Activated B cell treated with CpG ODN at 0.5 μM for 24 hours (primary cell): ENCODE measurements at regions of chr21 and their contacts with region 1.

Region 1: GRCh38 chr21:15841856-15842564 is 112.2 kb downstream of the USP25 start:
- DNase-seq: no peak
- ATAC-seq: no peak
- H3K4me3 Mint-ChIP-seq: no peak overlapping the region
- H3K27ac Mint-ChIP-seq: no peak overlapping the region
- H3K4me1 Mint-ChIP-seq: no peaks in the 10 kb centered on the region
- H3K27me3 Mint-ChIP-seq: no peaks in the 10 kb centered on the region
- CTCF ChIP-seq: no peak

Region 2: GRCh38 chr21:15754640-15755039 is 87.4 kb before region 1 on chr21:
- CTCF ChIA-PET with region 1: no interaction called
- POLR2A ChIA-PET with region 1: no interaction called
- intact Hi-C with region 1: no loop called
- DNase-seq: no peak
- ATAC-seq: no peak
- H3K4me3 Mint-ChIP-seq: no peak overlapping the region
- H3K27ac Mint-ChIP-seq: no peak overlapping the region
- H3K4me1 Mint-ChIP-seq: peaks cover 81% of the 10 kb centered on the region
- H3K27me3 Mint-ChIP-seq: no peaks in the 10 kb centered on the region
- CTCF ChIP-seq: no peak

Region 3: GRCh38 chr21:15826147-15826780 is 15.7 kb before region 1 on chr21:
- CTCF ChIA-PET with region 1: no interaction called
- POLR2A ChIA-PET with region 1: no interaction called
- intact Hi-C with region 1: no loop called
- DNase-seq: no peak
- ATAC-seq: peak; percentile 45
- H3K4me3 Mint-ChIP-seq: no peak overlapping the region
- H3K27ac Mint-ChIP-seq: no peak overlapping the region
- H3K4me1 Mint-ChIP-seq: no peaks in the 10 kb centered on the region
- H3K27me3 Mint-ChIP-seq: no peaks in the 10 kb centered on the region
- CTCF ChIP-seq: no peak

Region 4: DNA sequence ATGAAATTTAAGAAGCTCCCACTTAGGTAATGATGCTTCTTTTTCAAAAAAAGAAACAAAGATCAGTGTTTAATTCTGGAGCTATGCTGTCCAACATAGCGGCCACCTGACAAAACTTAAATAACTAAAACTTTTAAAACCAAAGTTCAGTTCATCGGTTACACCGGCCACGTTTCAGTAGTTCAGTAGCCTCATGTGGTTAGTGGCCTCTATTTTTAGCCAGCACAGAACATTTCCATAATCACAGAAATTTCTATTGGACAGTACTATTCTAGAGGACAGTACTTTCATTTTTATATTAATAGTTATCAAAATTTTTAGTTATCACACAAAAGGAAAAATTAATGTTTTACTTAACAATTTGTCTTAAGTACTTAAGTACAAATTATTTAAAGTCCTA is 28.8 kb after region 1 on chr21:
- CTCF ChIA-PET with region 1: no interaction called
- POLR2A ChIA-PET with region 1: no interaction called
- intact Hi-C with region 1: loop called (anchors 2 kb)
- DNase-seq: no peak
- ATAC-seq: no peak
- H3K4me3 Mint-ChIP-seq: peak overlapping the region; percentile 24
- H3K27ac Mint-ChIP-seq: no peak overlapping the region
- H3K4me1 Mint-ChIP-seq: peaks cover 14% of the 10 kb centered on the region
- H3K27me3 Mint-ChIP-seq: no peaks in the 10 kb centered on the region
- CTCF ChIP-seq: no peak

Region 5: GRCh38 chr21:15894596-15894995 is 52.6 kb after region 1 on chr21:
- CTCF ChIA-PET with region 1: no interaction called
- POLR2A ChIA-PET with region 1: no interaction called
- intact Hi-C with region 1: loop called (anchors 10 kb)
- DNase-seq: no peak
- ATAC-seq: no peak
- H3K4me3 Mint-ChIP-seq: no peak overlapping the region
- H3K27ac Mint-ChIP-seq: no peak overlapping the region
- H3K4me1 Mint-ChIP-seq: no peaks in the 10 kb centered on the region
- H3K27me3 Mint-ChIP-seq: no peaks in the 10 kb centered on the region
- CTCF ChIP-seq: no peak

Region 6: DNA sequence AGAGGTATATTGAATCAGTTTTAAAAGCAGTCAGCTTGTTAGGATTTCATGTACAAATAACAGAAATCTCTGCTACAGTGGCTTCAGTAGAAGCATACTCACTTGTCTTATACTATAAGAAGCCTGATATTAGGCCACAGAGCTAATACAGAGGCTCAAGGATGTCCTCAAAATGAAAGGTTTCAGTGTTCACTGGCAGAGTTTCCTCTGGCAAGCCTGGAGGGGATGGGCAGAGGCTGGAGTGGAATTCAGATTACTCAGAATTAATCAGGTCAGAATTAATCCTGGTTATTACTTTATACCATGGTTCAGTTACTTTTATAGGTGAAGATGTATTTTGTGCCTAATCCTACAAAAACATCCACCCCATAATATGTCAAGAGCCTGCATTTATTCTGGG is 408.3 kb after region 1 on chr21:
- CTCF ChIA-PET with region 1: no interaction called
- POLR2A ChIA-PET with region 1: no interaction called
- intact Hi-C with region 1: no loop called
- DNase-seq: no peak
- ATAC-seq: no peak
- H3K4me3 Mint-ChIP-seq: no peak overlapping the region
- H3K27ac Mint-ChIP-seq: no peak overlapping the region
- H3K4me1 Mint-ChIP-seq: no peaks in the 10 kb centered on the region
- H3K27me3 Mint-ChIP-seq: no peaks in the 10 kb centered on the region
- CTCF ChIP-seq: no peak